MCF 10A (cell line): ENCODE measurements at regions of chr17 and their contacts with region 1.

Region 1: DNA sequence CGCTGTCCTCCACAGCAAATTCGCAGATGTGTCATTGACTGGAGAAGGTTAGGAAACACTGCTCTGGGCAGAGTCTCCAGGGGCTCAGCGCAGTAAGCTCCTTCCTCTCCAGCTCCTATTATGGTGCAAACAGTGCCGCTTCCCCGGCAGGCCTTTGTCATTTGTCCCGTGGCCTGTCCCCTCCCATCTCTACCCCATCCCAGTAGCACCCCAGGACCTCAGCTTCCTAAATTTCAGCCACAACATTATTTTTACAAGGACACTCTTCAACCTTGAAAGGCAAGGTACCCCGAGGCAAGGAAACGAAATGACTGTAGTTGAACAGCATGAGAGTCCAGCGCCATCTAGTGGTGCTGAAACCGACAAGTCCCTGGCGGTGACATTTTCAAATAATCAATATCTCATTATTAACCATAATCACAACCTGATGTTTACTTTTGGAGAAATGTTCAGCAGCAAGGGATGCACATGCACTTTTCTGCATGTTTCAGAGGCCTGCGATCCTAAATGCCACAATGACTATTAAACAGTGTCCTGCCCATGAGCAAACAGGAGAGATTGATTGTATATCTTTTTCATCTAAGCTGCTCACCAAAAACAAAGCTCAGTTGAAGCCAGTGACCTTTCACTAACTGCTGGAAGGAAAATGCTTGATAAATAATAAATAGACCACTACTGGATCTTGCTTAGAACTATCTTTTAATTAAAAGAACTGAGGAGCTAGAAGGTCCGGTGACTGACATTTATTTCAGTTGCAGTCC is 16.5 kb downstream of the MRPS23 start:
- DNase-seq: peak; percentile 70
- H3K4me3 Mint-ChIP-seq: no peak overlapping the region
- H3K27ac Mint-ChIP-seq: no peak overlapping the region
- H3K4me1 Mint-ChIP-seq: peaks cover 15% of the 10 kb centered on the region
- H3K27me3 Mint-ChIP-seq: no peaks in the 10 kb centered on the region
- CTCF ChIP-seq: peak; percentile 78

Region 2: DNA sequence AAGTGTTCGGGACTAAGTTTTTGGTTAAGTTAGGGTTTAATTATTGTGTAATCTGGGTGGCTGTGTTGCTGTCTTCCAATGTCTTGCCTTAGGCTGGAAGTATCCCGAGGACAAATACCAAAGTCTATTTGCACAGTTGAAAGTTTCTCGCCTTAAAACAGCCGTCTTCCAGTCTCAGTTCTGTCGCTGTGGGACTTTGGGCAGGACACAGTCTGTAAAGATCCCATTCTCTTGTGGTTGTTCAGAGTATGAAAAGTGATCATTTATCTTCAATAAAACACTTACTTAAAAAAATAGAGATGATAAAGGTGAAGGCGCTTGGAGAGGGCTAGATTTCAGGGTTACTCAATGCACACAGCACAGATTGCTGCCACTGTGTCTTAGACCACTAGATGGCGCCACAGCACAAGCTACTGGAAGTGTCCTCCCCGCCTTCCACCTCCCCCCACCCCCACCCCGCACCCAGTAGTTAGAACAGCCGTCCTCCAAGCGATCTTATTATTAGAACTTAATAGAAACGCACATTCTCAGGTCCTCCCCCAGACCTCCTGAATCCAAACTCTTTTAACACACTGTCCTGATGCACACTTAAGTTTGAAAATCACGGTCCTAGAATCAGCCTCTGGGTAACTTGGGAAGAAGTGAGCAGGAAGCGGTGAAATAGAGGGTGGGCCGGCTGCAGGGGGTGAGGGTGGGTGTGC is 702.4 kb before region 1 on chr17:
- CTCF ChIA-PET with region 1: interaction called, 15 read pairs
- POLR2A ChIA-PET with region 1: interaction called, 4 read pairs
- intact Hi-C with region 1: loop called (anchors 2 kb)
- DNase-seq: peak; percentile 89
- H3K4me3 Mint-ChIP-seq: no peak overlapping the region
- H3K27ac Mint-ChIP-seq: no peak overlapping the region
- H3K4me1 Mint-ChIP-seq: peaks cover 5% of the 10 kb centered on the region
- H3K27me3 Mint-ChIP-seq: no peaks in the 10 kb centered on the region
- CTCF ChIP-seq: peak; percentile 85

Region 3: DNA sequence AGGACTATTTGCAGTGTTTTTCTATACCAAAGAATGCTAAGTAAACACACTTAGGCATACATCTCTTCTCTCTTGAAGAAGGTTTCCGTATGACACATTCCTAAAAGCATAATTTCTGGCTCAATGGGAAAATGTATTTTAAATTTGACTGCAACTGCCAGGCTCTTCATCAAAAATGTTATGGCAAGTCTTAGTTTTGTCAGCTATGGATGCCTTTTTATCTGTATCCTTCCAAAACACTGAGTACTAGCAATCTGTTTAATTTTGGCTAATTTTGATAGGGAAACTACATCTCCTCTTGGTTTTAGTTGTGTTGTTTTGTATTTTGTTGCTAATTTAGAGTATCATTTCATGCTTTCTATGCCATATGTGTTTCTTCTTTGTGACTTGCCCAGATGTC is 18.9 kb before region 1 on chr17:
- CTCF ChIA-PET with region 1: interaction called, 37 read pairs
- POLR2A ChIA-PET with region 1: no interaction called
- intact Hi-C with region 1: no loop called
- DNase-seq: no peak
- H3K4me3 Mint-ChIP-seq: no peak overlapping the region
- H3K27ac Mint-ChIP-seq: no peak overlapping the region
- H3K4me1 Mint-ChIP-seq: no peaks in the 10 kb centered on the region
- H3K27me3 Mint-ChIP-seq: peaks cover 58% of the 10 kb centered on the region
- CTCF ChIP-seq: no peak

Region 4: GRCh38 chr17:58692239-58693055 is 859.1 kb after region 1 on chr17 and contains the start of gene RAD51C:
- CTCF ChIA-PET with region 1: no interaction called
- POLR2A ChIA-PET with region 1: no interaction called
- intact Hi-C with region 1: no loop called
- DNase-seq: peak; percentile 84
- H3K4me3 Mint-ChIP-seq: peak within 1 kb of the TSS; percentile 97
- H3K27ac Mint-ChIP-seq: peak within 1 kb of the TSS; percentile 91
- H3K4me1 Mint-ChIP-seq: peaks cover 12% of the 10 kb centered on the region
- H3K27me3 Mint-ChIP-seq: no peaks in the 10 kb centered on the region
- CTCF ChIP-seq: no peak
- total RNA-seq, gene RAD51C: 48.3 and 59.5 TPM in 2 replicates